Activated CD4-positive, alpha-beta memory T cell treated with anti-CD3 and anti-CD28 coated beads for 36 hours (primary cell): ENCODE measurements at regions of chr9 and their contacts with region 1.

Region 1: GRCh38 chr9:127916665-127917613 is at the start of gene ST6GALNAC4:
- DNase-seq: peak; percentile 98
- H3K4me3 Mint-ChIP-seq: peak within 1 kb of the TSS; percentile 77
- H3K27ac Mint-ChIP-seq: peak within 1 kb of the TSS; percentile 54
- H3K4me1 Mint-ChIP-seq: peaks cover 43% of the 10 kb centered on the region
- H3K27me3 Mint-ChIP-seq: no peaks in the 10 kb centered on the region
- total RNA-seq, gene ST6GALNAC4: 21.2 to 23.5 TPM

Region 2: DNA sequence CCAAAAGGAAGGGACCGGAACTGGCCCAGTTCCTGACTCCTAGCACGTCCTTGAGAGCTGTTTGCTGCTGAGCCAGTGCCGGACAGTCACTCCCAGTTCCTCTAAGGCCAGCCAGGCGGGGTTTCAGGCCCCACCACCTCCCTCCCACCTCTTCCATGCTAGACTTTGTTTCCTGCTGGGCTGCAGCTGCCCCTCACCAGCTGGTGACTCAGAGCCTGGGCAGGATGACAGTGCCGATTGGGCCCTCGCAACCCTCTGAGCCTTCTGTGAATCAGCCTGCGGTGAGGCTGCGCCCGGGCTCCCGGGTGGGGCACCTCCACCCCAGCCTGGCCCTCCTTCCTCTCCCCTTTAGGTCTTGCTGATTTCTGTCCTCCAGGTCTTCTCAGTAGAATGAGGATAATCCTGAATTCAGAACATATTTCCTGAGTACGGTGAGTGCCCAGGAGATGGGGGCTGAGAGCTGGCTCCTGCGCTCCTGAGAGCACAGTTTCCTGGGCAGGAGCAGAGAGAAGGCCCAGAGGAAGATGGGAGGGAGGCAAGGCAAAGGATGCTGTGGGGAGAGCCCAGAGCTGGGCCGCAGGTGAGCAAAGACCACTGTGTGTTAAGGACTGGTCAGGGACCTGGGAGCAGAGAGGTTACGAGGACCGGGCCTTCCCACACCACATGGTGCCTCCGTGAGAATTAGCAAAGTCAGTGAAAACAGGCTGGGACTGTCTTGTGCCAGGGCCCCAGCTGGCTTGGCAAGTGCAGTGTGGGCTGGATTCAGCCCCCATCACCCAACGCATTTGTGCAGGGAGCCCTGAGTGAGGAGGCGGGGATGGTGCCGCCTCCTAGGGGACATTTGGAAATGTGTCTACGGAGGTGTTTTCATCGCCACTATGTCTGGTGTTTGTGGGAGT is 337.7 kb before region 1 on chr9:
- CTCF ChIA-PET with region 1: no interaction called
- POLR2A ChIA-PET with region 1: no interaction called
- intact Hi-C with region 1: loop called (anchors 10 kb)
- DNase-seq: peak; percentile 90
- H3K4me3 Mint-ChIP-seq: peak overlapping the region; percentile 72
- H3K27ac Mint-ChIP-seq: peak overlapping the region; percentile 80
- H3K4me1 Mint-ChIP-seq: peaks cover 31% of the 10 kb centered on the region
- H3K27me3 Mint-ChIP-seq: peaks cover 2% of the 10 kb centered on the region

Region 3: DNA sequence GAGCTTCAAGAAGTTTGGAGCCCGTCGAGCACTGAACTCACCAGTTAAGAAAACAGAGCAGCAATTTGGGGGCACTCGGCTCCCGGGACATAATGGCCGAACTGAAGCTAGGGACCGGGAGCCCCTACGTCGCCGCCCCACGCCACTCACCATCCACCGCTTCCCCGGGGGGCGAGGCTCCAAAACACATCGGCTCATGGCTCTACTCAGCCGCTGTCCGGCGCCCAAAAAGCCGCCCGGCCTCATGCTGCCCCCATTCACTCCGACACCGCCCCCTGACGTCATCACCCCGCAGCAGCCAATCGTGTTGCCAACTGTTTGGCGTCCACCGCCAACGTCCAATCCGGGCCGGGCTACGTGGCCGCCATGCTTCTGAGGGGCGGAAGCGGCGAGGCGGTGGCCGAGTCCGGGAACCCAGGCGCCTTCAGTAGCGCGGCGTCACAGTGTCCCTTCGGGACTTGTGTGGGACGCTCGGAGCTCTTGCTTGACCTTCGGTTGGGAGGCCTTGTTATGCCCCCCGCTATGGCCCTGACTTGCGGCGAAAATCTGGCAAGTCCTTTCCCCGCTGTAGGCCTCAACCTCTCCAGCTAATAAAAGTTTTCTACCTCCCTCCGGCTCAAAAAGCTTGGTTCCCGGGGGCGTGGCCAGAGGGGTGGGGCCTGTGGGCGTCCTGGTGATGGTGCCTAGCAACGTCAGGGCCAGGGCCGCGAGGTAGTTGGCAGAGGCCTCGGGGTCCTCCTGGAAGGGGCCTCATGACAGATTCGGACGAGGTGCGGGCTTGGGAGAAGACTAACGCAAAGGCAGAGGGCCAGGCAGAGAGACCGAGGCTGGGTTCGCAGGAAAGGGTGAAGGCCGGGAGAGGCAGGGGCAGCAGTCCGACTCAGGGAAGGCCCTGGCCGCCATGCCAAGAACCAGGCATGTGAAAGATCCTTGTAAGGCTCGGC is 201.3 kb before region 1 on chr9 and contains the starts of genes PTRH1 and TTC16:
- CTCF ChIA-PET with region 1: interaction called, 3 read pairs
- POLR2A ChIA-PET with region 1: interaction called, 3 read pairs
- intact Hi-C with region 1: loop called (anchors 5 kb)
- DNase-seq: peak; percentile 98
- H3K4me3 Mint-ChIP-seq: peak within 1 kb of the TSS; percentile 90
- H3K27ac Mint-ChIP-seq: peak within 1 kb of the TSS; percentile 74
- H3K4me1 Mint-ChIP-seq: peaks cover 29% of the 10 kb centered on the region
- H3K27me3 Mint-ChIP-seq: no peaks in the 10 kb centered on the region
- total RNA-seq, gene PTRH1: 20.9 to 22.7 TPM
- total RNA-seq, gene TTC16: 0.61 to 0.69 TPM

Region 4: DNA sequence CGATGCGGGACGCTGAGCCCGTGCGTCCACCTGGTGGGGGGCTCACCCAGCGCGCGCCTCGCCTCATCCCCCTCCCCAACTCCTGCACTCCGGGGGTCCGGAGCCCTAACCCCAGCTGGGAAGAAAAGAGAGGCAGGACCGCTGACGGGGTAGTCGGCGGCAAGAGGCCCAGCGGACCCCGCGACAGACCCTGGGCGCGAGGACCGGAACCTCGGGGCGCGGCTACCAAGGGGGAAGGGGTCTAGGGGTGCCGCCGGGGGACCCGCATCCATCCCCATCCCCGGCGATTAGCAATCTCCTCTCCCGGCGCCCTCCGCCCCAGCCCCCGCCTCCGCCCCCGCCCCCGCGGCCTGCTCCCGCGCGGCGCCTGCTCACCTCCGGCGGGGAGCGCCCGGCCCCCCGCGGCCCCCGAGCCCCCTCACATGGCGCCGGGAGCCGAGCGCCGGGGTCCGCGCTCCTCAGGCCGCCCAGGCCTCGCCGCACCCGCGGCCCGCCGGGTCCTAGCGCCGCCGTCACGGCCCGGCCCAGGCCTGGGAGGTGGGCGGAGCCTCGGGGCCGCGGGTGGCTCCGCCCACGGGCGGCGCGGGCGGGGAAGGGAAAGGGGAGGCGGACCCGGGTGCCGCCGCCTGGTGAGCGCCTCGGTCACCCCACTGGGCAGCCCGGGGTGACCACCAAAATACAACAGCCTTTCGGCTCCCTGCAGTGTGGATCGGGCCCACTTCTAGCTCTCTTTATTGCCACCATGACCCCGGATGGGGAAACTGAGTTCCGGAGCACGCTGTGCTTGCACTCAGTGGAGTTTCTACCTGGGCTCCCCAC is 17.6 kb before region 1 on chr9 and contains the start of gene ST6GALNAC6:
- CTCF ChIA-PET with region 1: interaction called, 9 read pairs
- POLR2A ChIA-PET with region 1: interaction called, 10 read pairs
- intact Hi-C with region 1: loop called (anchors 2 kb)
- DNase-seq: peak; percentile 79
- H3K4me3 Mint-ChIP-seq: peak within 1 kb of the TSS; percentile 85
- H3K27ac Mint-ChIP-seq: peak within 1 kb of the TSS; percentile 82
- H3K4me1 Mint-ChIP-seq: peaks cover 32% of the 10 kb centered on the region
- H3K27me3 Mint-ChIP-seq: no peaks in the 10 kb centered on the region
- total RNA-seq, gene ST6GALNAC6: 50.1 to 53.8 TPM